GM10248 (cell line): ENCODE measurements at regions of chr11 and their contacts with region 1.

Region 1: DNA sequence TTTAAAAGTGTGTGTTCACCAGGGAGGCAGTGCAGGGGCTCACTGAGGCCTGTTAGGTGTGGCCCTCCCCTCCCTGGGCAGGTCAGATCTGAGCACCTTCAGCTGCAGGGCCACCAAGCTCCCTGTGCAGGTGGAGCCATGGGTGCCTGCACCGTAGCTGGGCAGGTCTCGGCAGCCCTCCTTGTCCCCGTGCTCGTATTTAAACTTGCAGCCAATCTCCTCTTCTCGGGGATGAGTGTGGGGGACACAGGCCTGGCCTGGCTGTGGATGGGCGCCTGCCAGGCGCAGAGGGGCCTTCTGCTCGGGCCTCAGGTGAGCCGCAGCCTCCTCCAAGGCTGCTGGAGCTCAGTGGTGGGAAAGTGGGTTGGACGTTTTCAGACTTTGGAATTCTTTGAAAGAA is 19.1 kb downstream of the PHRF1 start:
- DNase-seq: no peak
- CTCF ChIP-seq: no peak

Region 2: DNA sequence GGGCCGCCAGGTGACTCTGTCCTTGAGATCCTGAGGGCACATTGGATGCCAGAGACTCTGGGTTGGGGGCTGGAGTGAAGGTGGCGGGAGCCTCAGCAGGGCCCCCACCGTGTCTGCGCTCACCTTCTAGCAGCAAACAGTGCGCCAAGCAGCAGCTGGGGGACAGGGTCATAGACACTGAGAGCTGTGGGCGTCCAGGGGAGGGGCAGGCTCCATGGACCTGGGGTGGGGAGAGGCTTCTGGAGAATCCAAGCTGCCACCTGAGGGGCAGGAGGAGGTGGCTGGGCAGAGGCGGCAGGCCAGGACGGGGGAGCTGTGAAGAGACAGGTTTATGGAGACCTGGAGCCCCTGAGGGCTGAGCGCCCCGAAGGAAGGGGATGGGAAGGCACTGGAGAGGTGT is 11.1 kb before region 1 on chr11:
- CTCF ChIA-PET with region 1: no interaction called
- POLR2A ChIA-PET with region 1: interaction called, 10 read pairs
- DNase-seq: no peak
- CTCF ChIP-seq: no peak